Dorsolateral prefrontal cortex (tissue), 120 donors: ENCODE measurements at regions of chr22 and their contacts with region 1.

Region 1: GRCh38 chr22:31623592-31624304 is 38.3 kb downstream of the PISD start:
- DNase-seq: peak in 1 of 10 donors; percentile 52
- H3K4me3 ChIP-seq: peak overlapping the region in 55 of 59 donors; percentile 9 to 71 (median 56)
- H3K27ac ChIP-seq: peak overlapping the region in 58 of 59 donors; percentile 6 to 97 (median 90)
- H3K27me3 ChIP-seq: no peaks in the 10 kb centered on the region
- CTCF ChIP-seq: no peak

Region 2: GRCh38 chr22:31465307-31465706 is 158.4 kb before region 1 on chr22:
- intact Hi-C with region 1: no loop called
- DNase-seq: no peak
- H3K4me3 ChIP-seq: no peak overlapping the region
- H3K27ac ChIP-seq: no peak overlapping the region
- H3K27me3 ChIP-seq: no peaks in the 10 kb centered on the region
- CTCF ChIP-seq: no peak

Region 3: GRCh38 chr22:31579835-31580242 is 43.9 kb before region 1 on chr22:
- intact Hi-C with region 1: loop called in 1 of 2 experiments (anchors 5 kb)
- DNase-seq: no peak
- H3K4me3 ChIP-seq: no peak overlapping the region
- H3K27ac ChIP-seq: peak overlapping the region in 30 of 59 donors; percentile 2 to 96 (median 41)
- H3K27me3 ChIP-seq: no peaks in the 10 kb centered on the region
- CTCF ChIP-seq: no peak

Region 4: DNA sequence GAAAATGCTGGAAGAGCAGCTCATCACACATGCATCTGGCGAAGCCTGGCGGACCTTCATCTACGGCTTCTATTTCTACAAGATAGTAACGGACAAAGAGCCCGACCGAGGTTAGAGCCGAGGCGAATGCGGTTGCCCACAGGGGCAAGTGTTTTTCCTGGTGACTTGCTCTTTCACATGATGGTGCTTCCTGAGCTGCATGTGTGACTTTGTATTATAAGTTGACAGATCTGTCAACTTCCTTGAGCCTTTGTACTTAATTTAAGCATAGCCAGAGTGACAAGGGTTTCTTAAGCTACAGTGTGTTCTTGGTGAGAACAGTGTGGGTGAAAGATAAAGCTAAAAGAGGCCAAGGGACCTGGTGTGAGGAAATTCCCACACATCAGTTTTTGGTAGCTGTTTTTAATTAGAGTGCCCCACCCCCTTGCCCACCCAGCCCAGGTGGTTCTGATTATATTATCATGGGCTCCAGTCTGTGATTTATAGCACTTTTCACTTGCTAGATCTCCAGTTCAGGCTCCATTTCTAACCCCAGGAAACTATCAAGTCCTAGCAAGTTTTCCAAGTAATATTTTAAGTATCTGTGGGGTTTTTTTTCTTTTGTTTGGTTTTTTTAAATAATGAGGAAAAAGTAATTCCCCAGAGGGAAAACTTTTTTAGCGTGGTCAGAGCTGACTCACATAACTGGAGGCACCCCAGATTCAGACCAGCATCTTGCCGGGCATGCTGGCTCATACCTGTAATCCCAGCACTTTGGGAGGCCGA is 252.6 kb after region 1 on chr22:
- intact Hi-C with region 1: no loop called
- DNase-seq: no peak
- H3K4me3 ChIP-seq: no peak overlapping the region
- H3K27ac ChIP-seq: peak overlapping the region in 7 of 59 donors; percentile 2 to 44 (median 9)
- H3K27me3 ChIP-seq: no peaks in the 10 kb centered on the region
- CTCF ChIP-seq: no peak

Region 5: GRCh38 chr22:32073823-32074380 is 450.2 kb after region 1 on chr22:
- intact Hi-C with region 1: no loop called
- DNase-seq: no peak
- H3K4me3 ChIP-seq: no peak overlapping the region
- H3K27ac ChIP-seq: no peak overlapping the region
- H3K27me3 ChIP-seq: peaks cover 0 to 22% (median 0%) of the 10 kb centered on the region in 45 donors
- CTCF ChIP-seq: no peak